ENCODE measurements at regions of chr17 and their contacts with region 1.

Region 1: DNA sequence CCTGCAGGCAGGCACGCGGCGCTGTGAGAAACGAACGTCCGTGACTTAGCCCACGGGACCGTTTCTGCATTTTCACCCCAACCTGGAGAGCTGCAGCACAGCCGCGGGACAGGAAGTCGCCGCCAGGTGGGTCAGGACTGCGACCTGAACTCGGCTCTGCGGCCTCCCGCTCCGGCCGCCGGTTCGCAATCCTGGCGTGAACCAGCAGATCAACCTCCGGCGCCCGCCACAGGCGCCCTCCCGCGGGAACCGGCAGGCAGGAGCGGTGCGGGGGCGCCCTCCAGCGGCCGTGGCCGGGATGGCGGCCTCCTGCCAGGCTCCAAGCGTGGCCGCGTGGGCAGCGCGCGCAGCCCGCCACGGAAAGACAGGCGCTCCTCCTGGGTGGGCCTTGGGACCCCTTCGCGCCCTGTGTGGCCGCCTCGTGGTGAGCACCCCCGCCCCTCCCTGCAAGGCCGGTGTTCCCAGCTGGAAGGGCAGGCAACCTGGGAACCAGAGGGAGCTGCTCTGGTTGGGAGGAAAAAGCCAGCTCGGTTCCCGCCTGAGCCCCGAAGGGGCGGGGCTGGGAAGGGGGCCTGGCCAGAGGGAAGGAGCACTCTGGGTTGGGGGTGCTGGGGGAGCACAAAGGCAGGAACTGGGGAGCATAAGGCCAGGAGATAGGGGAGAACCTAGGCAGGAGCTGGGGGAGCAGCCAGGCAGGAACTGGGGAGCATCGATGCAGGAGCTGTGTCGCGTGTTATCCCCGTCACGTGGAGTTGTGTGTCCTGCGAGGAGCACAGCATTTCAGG is 28.2 kb downstream of the ACTG1 start:
- DNase-seq: peak; percentile 73 to 99 (median 90)
- ATAC-seq: peak; percentile 89
- H3K4me3 ChIP-seq: peak overlapping the region; percentile 9 to 22
- H3K27ac ChIP-seq: no peak overlapping the region
- H3K4me1 ChIP-seq: peaks cover 12 to 49% of the 10 kb centered on the region in 2 donors
- H3K27me3 ChIP-seq: peaks cover 0 to 40% of the 10 kb centered on the region in 2 donors
- CTCF ChIP-seq: peak; percentile 97 to 100

Region 2: DNA sequence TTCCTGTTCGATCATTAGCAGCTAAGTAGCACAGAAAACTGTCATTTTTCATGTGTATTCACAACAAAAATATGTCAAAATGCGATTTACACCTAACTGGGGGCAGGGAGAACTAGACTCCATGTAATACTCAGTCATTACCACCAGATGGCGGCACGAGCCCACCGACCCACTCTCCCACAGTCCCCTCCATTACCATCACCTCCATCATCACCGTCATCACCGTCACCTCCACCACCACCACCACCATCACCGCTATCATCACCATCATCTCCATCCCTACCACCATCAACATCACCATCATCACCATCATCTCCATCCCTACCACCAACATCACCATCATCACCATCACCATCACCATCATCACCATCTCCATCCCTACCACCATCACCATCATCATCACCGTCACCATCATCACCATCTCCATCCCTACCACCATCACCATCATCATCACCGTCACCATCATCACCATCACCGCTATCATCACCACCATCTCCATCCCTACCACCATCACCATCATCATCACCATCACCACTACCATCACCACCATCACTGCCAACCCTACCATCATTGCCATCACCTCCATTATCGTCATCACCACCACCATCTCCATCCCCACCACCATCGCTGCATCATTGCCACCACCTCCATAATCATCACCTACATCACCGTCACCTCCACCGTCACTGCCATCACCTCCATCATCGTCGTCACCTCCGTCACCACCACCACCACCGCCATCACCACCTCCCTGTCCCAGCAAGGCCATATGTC is 230.8 kb before region 1 on chr17:
- intact Hi-C with region 1: loop called in 1 of 2 experiments (anchors 5 kb)
- DNase-seq: peak in 2 of 4 donors; percentile 46 to 55
- ATAC-seq: peak; percentile 30
- H3K4me3 ChIP-seq: no peak overlapping the region
- H3K27ac ChIP-seq: no peak overlapping the region
- H3K4me1 ChIP-seq: peaks cover 12 to 19% of the 10 kb centered on the region in 2 donors
- H3K27me3 ChIP-seq: no peaks in the 10 kb centered on the region
- CTCF ChIP-seq: peak; percentile 77 to 80

Region 3: DNA sequence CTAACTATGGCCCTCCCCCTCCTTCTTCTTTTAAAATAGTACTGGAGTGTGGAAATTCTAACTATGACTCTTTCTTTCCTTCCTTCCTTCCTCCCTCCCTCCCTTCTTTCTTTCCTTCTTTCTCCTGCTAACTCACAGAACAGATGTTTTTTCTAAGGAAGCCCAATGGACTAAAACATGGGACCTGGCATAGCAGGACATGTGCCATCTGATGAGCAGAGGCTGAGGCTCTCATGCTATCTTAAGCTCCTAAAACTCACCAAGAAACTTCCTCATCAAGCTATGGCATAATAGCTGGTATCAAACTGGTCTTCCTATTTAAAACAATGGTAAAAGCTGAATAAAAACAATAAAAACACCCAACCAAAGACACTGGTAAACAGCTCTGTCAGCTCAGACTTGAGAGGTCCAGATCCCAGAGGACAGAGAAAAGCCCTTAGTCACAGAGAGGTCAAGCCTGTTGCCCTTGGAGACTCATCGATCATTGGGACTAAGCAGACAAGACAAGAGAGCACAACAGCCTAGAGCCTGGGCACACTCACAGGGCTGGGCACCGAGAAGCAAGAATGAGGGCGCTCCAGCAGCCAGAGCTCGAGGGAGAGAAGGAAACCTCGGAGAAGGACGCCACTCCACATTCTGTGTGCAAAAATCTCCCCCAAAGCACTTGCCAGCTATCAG is 216.9 kb before region 1 on chr17:
- intact Hi-C with region 1: loop called in 1 of 2 experiments (anchors 10 kb)
- DNase-seq: no peak
- ATAC-seq: no peak
- H3K4me3 ChIP-seq: no peak overlapping the region
- H3K27ac ChIP-seq: peak overlapping the region in 1 of 2 donors; percentile 21
- H3K4me1 ChIP-seq: peaks cover 0 to 24% of the 10 kb centered on the region in 2 donors
- H3K27me3 ChIP-seq: no peaks in the 10 kb centered on the region
- CTCF ChIP-seq: no peak

Region 4: GRCh38 chr17:81394921-81395599 is 89.3 kb before region 1 on chr17 and contains the start of gene BAHCC1:
- intact Hi-C with region 1: loop called (anchors 10 kb)
- DNase-seq: peak; percentile 99 to 100 (median 100)
- ATAC-seq: peak; percentile 79
- H3K4me3 ChIP-seq: peak within 1 kb of the TSS; percentile 45 to 72
- H3K27ac ChIP-seq: peak within 1 kb of the TSS; percentile 93
- H3K4me1 ChIP-seq: peaks cover 21 to 79% of the 10 kb centered on the region in 2 donors
- H3K27me3 ChIP-seq: peaks cover 0 to 91% of the 10 kb centered on the region in 2 donors
- CTCF ChIP-seq: no peak
- polyA plus RNA-seq, gene BAHCC1: 15.8 to 28.5 (median 23.6) TPM

Region 5: DNA sequence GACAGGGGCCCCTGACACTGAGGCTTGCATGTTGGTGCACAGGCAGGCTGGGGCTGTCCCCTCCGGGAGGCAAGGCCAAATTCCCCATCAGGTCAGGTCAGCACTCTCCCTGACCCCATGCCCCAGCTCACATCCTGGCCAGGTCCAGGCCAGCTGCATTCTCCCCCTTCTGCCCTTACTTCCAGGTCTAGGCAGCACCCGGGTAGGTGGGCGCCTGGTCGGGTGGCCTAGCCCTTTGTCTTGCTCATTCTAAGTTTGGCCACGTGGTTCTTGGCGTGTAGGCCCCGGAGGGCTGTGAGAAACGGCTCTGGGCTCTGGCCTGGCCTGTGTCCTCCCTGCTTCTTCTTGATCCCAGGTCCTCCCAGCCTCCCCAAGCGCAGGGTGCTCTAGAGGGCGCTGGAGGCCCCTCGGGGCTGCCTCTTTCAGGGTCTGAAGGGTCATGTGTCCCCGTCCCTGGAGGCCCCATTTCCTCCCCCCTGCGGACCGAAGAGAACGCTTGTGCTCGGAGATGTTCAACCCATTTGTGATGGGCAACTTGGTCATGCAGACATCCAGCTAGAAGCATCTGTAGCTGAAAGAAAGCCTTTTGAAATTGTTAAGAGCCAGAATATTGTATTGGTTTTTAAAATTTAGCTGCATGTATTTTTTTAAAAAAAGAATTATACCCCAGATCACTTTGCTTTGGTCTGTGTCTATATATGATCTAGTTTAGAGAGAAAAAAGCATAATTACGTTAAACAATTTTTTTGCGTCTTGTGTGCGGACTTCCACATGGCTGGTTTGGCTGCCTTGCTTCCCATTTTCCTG is 82.5 kb before region 1 on chr17:
- intact Hi-C with region 1: loop called (anchors 10 kb)
- DNase-seq: no peak
- ATAC-seq: peak; percentile 4
- H3K4me3 ChIP-seq: peak overlapping the region in 1 of 2 donors; percentile 72
- H3K27ac ChIP-seq: peak overlapping the region; percentile 93 to 95
- H3K4me1 ChIP-seq: peaks cover 46 to 79% of the 10 kb centered on the region in 2 donors
- H3K27me3 ChIP-seq: peaks cover 0 to 56% of the 10 kb centered on the region in 2 donors
- CTCF ChIP-seq: no peak